A673 (cell line): ENCODE measurements at regions of chr1 and their contacts with region 1.

Region 1: DNA sequence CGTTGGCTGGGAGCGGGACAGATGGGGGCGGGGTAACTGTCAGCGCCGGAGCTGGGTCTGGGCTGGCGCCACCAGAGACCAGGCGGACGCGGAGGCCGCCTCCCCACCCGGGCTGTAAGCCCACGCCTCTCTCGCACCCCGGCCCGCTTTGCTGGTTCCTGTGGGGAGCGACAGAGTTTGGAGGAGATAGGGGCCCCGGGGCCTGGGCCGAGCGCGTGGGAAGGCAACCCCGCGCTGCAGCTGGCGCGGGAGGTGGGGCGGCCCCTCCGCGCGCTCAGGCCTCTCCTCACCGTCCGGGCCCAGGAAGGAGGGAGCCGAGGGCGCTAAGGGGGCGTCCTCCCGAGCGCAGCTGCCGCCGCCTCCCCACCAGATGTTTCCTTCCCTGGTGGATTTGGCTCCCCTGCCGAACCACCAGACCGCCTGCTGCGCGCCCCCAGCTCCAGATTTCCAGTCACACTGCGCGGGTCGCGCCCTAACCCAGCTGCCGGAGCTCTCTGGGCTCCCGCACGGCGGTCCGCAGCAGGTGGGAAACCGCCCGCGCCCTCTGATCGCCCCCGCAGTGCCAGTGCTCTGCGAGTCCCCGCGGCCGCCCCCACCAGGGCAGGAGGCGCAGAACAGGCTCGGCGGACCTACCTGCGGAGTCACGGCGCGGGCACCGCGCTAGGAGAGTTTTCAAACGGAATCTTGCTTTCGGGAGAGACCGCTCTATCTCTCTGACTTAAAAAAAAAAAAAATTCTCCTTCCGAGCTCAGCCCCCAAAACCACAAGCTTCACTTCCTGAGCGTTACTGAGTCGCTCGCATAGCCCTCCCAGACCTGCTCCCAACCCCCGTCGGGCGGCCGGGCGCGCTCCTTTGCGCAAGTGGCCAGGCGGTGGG is 1.1 kb downstream of the GFI1 start:
- DNase-seq: peak; percentile 42
- H3K4me3 ChIP-seq: peak overlapping the region; percentile 61
- H3K27ac ChIP-seq: no peak overlapping the region
- H3K4me1 ChIP-seq: peaks cover 22% of the 10 kb centered on the region
- H3K27me3 ChIP-seq: peaks cover 68% of the 10 kb centered on the region
- CTCF ChIP-seq: peak; percentile 57

Region 2: DNA sequence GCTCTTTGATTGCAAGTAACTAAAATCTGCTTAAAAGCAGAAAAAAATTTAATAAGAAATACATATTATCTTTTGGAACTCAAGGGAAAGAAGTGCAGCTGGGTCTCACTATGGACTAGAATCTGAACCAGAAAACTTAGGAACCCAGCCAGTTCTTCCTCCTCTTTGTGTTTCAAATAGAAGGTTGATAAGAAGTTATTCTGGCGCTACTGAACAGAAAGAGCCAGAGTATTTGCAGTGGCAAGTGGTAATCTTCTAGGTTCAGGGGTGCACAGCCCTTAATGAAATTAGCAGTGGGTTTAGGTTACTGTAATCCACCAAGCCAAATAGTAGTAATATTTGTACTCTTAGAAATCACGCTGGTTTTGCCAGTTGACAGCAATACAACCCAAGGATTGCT is 377.0 kb before region 1 on chr1:
- CTCF ChIA-PET with region 1: no interaction called
- POLR2A ChIA-PET with region 1: interaction called, 10 read pairs
- intact Hi-C with region 1: no loop called
- DNase-seq: no peak
- H3K4me3 ChIP-seq: no peak overlapping the region
- H3K27ac ChIP-seq: no peak overlapping the region
- H3K4me1 ChIP-seq: no peaks in the 10 kb centered on the region
- H3K27me3 ChIP-seq: no peaks in the 10 kb centered on the region
- CTCF ChIP-seq: no peak

Region 3: DNA sequence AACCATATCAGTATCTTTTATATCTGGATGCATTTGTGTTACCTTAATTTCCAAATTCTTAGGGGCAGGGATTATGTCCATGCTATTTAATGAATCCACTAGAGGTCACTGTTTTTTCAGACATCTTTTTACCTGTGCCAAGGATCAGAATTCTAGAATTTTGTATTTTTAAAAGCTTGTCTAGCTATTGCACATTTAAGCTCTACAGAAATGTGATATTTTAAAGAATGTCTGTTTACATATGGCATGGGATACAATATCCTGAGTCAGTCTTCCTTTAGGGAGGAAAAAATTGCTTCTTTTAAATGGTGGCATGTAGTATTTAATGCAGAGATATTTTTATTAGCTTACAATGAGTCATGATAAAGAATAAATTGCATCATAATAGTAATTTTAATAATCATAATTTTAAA is 175.4 kb before region 1 on chr1:
- CTCF ChIA-PET with region 1: interaction called, 3 read pairs
- POLR2A ChIA-PET with region 1: no interaction called
- intact Hi-C with region 1: loop called (anchors 10 kb)
- DNase-seq: peak; percentile 52
- H3K4me3 ChIP-seq: no peak overlapping the region
- H3K27ac ChIP-seq: no peak overlapping the region
- H3K4me1 ChIP-seq: no peaks in the 10 kb centered on the region
- H3K27me3 ChIP-seq: no peaks in the 10 kb centered on the region
- CTCF ChIP-seq: peak; percentile 64

Region 4: DNA sequence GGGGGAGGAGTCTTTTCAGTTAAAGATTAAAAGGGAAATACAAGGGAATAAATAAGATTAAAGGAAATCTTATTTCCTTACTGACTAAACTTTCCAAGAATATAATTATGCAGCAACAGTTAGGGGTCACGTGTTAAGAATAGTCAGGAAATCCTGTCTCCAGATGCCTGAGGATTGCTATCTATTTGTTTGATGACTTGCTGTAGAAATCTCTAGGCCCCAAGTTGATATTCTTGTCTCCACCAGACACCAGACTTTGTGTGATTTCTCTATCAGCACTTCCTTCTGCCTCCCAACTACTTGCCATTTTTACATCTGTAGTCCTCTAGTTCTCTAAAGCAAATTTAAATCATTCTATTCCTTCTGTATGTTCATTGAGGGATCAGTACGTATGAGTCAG is 109.3 kb before region 1 on chr1:
- CTCF ChIA-PET with region 1: no interaction called
- POLR2A ChIA-PET with region 1: no interaction called
- intact Hi-C with region 1: loop called (anchors 10 kb)
- DNase-seq: peak; percentile 88
- H3K4me3 ChIP-seq: no peak overlapping the region
- H3K27ac ChIP-seq: peak overlapping the region; percentile 24
- H3K4me1 ChIP-seq: peaks cover 14% of the 10 kb centered on the region
- H3K27me3 ChIP-seq: no peaks in the 10 kb centered on the region
- CTCF ChIP-seq: no peak